Activated T-helper 1 cell treated with anti-CD3 and anti-CD28 coated beads, Interleukin-12 subunit alpha, Interleukin-12 subunit beta, Interleukin-2, Interleukin-4 antibody, amounts not matched to agents 30 ng/mL and 10 ng/mL and 1 ng/mL, durations not matched to agents 14 hours and 24 hours and 36 hours (primary cell): ENCODE measurements at regions of chr4 and their contacts with region 1.

Region 1: DNA sequence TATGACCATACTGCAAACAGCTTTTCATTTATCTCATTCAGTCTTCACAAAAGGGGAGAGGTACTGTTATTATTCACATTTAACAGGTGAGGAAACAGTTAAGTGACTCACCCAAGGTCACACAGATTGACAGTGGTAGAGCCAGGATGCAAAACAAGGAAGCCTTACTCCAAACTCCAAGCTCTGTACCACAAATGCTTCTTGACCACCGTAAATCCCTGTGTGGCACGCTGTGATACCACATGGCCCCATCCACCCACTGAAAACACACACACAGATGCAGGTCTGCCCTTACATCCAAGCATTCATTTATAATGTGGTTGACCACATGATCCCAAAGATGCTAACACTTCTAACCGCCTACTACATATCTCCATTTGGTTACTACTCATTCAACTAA is 129.5 kb downstream of the TSPAN5 start:
- DNase-seq: no peak
- H3K4me3 Mint-ChIP-seq: peak overlapping the region; percentile 9
- H3K27ac Mint-ChIP-seq: peak overlapping the region; percentile 64
- H3K4me1 Mint-ChIP-seq: peaks cover 54% of the 10 kb centered on the region
- H3K27me3 Mint-ChIP-seq: no peaks in the 10 kb centered on the region

Region 2: DNA sequence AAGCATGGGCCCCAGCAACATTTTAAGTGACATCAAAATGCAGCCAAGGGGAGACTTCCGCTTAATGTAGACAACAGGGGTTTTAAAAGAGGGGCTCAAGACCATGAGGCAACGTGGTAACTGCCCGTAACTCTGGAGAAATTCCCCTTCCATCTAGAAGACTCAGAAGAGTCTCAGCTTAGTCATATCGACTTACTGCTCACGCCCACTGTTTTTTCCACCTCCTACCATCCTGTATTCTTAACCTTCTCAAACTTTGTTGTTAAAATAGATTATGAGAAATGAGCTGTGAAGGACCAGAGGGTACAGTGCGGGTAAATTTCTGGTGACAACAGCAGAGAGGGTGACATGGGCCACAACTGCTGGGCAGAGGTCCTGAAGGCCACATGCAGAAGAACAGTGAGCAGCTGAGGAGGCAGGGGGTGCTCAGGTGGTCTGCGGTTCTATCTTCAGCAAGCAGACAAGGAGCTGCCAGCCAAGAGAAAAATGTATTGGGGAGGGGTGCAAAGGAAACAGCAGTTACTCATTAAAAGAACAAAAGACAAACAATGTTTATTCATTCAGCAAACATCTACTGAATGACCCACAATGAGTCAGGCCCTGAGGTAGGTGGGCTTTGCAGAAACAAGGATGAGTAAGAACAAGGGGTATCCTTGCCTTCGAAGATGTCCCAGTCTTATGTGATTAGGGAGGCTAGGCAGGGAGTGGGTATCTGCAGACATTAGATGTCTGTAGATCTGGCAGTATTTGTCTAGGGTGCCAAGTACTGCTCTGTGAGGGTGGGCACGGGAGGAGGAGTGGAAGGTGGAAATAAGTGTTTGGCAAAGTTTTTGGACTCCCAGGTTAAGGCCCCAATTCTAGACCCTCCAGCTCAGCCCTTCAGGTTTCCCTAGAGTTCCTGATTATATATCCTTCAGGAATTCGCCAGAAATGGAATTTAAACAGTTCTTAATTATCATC is 45.8 kb before region 1 on chr4:
- intact Hi-C with region 1: loop called (anchors 1 kb)
- DNase-seq: peak; percentile 40
- H3K4me3 Mint-ChIP-seq: peak overlapping the region; percentile 72
- H3K27ac Mint-ChIP-seq: peak overlapping the region; percentile 98
- H3K4me1 Mint-ChIP-seq: peaks cover 92% of the 10 kb centered on the region
- H3K27me3 Mint-ChIP-seq: no peaks in the 10 kb centered on the region

Region 3: DNA sequence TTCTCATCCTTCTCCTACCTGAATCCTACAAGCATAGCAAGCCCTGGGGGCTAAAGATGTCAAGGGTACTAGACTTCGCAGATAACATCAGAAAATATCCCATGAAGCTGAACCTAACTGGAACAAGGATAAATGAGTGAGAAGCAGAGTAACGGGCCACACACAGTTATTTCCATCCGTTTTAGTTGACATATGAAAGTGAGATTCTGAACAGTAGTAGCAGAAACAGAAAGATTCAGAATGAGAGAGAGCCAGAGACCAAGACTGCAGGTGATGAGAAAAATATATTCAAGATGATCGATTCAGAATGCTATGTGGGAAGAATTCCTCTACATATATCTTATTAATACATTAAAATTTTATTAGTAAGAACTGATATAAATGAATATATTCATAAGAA is 35.6 kb before region 1 on chr4:
- intact Hi-C with region 1: loop called (anchors 1 kb)
- DNase-seq: no peak
- H3K4me3 Mint-ChIP-seq: peak overlapping the region; percentile 3
- H3K27ac Mint-ChIP-seq: peak overlapping the region; percentile 67
- H3K4me1 Mint-ChIP-seq: peaks cover 54% of the 10 kb centered on the region
- H3K27me3 Mint-ChIP-seq: no peaks in the 10 kb centered on the region

Region 4: DNA sequence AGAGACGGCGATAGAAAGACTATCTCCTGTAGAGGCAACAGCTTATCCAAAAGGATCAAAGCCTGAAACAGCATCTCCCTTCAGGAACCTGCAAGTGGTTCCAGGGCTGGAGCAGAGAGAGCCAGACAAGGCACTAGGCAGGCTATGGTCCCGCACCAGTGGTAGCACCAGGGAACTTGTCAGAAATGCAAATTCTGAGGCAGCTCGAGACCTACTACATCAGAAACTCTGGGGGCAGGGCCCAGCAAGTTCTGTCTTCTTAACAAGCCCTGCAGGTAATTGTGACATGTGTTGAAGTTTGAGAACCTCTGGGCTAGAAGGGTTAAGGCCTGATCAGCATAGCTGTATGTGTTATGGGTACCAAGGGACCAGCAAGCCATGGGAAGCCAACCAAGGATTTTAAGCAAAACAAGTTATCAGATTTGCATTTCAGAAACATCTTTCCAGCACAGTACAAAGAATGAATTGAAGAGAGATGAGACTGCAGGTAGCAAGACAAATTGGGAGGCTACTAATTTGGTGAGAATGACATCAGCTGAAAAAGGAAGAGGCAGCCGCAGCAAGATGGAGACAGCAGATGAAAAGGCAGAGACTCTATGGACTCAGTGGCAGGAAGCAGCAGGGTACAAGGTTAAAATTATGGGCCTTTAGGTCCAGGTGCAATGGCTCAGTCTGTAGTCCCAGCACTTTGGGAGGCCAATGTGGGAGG is 10.2 kb before region 1 on chr4:
- intact Hi-C with region 1: loop called (anchors 1 kb)
- DNase-seq: no peak
- H3K4me3 Mint-ChIP-seq: peak overlapping the region; percentile 46
- H3K27ac Mint-ChIP-seq: peak overlapping the region; percentile 79
- H3K4me1 Mint-ChIP-seq: peaks cover 80% of the 10 kb centered on the region
- H3K27me3 Mint-ChIP-seq: no peaks in the 10 kb centered on the region

Region 5: DNA sequence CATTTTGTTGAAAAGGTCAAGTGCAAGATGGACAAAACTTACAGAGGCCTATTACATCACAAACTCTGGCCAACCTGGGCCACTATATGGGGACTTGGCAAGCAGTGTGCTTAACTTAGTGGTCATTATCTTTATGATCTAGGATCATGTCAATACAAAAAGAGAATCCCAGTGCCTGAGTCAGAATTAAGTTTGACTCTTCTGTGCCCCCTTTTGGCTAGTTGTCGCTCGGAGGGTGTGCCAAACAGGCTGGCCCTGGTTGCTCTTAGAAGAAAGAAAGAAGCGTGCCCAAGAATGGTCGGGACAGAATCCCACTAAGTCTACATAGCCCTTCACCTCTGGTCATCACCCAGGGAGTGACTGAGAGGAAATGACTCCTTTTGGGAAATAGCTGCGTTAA is 299.9 kb after region 1 on chr4:
- intact Hi-C with region 1: no loop called
- DNase-seq: no peak
- H3K4me3 Mint-ChIP-seq: no peak overlapping the region
- H3K27ac Mint-ChIP-seq: no peak overlapping the region
- H3K4me1 Mint-ChIP-seq: no peaks in the 10 kb centered on the region
- H3K27me3 Mint-ChIP-seq: peaks cover 9% of the 10 kb centered on the region